ENCODE measurements at regions of chr22 and their contacts with region 1.

Region 1: DNA sequence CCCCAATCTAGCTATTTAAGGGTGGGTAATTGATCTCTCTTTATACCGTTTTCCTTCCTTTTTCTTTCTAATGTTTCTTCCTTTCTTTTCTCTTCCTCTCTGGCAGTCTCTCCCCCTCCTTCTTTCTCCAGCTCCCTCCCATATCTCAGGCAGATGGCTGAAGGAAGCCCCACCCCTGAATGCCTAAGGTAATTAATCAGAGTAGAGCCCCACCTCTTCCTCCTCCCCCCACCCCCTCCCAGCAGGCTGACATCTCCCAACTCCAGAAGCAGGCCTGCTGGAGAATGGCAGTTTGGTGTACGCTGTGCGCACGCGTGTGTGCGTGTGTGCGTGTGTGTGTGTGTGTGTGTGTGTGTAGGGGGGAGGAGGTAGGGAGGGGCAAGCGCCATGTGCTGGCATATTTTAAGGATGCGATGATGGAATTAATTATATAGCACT is 122.6 kb downstream of the APOL5 start:
- DNase-seq: peak; percentile 87
- ATAC-seq: peak; percentile 69

Region 2: DNA sequence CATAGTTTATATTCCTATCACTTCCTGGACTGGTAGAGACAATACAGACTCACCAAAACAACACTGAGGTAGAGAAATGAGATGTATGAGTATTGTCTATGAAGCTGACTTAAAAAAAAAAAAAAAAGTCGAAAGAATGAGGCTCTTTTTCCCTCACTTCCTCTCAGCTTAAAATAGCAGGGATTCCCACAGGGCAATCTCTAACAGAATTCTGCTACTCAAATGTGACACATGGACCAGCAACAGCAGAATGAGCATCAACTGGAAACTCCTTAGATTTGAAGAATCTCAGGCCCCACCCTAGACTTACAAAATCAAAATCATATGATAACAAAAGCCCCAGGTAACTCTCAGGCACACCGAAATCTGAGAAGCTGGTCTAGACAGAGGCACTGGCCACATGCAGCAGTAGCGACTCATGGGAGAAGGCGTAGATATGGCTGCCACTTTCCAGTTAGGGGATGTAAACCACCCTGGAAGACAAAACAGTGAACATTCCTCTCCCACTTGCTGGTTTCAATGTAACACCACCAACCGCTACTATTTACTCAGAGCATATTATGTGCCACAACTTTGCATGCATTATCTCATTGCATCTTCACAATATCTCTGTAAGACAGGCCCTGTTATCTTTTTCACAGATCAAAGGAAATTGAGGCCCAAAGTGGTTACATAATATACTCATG is 60.3 kb after region 1 on chr22:
- intact Hi-C with region 1: loop called (anchors 5 kb)
- DNase-seq: no peak
- ATAC-seq: no peak

Region 3: DNA sequence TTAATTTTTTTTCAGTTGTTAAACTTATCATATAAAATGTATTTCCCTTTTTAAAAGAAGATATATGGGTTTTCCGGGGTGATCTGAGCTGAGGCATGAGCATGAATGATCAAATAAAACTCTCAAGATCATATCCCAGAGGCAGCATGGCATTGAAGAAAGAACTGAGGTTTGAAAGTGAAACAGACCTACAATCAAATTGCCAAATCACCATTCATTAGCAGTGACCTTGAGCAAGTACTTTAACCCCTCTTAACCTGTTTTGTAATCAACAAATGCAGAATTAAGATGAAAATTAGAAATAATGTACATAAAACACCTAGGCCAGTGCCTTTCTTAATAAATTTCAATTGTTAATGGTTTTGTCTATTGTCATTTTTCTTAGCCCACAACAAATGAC is 72.3 kb after region 1 on chr22:
- intact Hi-C with region 1: no loop called
- DNase-seq: no peak
- ATAC-seq: no peak

Measured in Right ventricle myocardium superior (tissue), 1 donor.